ENCODE measurements at regions of chr6 and their contacts with region 1.

Region 1: GRCh38 chr6:26537846-26538571 is at the start of gene HMGN4:
- DNase-seq: peak; percentile 84 to 91
- ATAC-seq: peak; percentile 81 to 86 (median 83)
- H3K4me3 ChIP-seq: peak within 1 kb of the TSS; percentile 81
- H3K27ac ChIP-seq: peak within 1 kb of the TSS; percentile 86
- H3K4me1 ChIP-seq: peaks cover 24% of the 10 kb centered on the region
- H3K27me3 ChIP-seq: no peaks in the 10 kb centered on the region
- CTCF ChIP-seq: no peak
- total RNA-seq, gene HMGN4: 18.5 to 38.4 (median 27.8) TPM

Region 2: DNA sequence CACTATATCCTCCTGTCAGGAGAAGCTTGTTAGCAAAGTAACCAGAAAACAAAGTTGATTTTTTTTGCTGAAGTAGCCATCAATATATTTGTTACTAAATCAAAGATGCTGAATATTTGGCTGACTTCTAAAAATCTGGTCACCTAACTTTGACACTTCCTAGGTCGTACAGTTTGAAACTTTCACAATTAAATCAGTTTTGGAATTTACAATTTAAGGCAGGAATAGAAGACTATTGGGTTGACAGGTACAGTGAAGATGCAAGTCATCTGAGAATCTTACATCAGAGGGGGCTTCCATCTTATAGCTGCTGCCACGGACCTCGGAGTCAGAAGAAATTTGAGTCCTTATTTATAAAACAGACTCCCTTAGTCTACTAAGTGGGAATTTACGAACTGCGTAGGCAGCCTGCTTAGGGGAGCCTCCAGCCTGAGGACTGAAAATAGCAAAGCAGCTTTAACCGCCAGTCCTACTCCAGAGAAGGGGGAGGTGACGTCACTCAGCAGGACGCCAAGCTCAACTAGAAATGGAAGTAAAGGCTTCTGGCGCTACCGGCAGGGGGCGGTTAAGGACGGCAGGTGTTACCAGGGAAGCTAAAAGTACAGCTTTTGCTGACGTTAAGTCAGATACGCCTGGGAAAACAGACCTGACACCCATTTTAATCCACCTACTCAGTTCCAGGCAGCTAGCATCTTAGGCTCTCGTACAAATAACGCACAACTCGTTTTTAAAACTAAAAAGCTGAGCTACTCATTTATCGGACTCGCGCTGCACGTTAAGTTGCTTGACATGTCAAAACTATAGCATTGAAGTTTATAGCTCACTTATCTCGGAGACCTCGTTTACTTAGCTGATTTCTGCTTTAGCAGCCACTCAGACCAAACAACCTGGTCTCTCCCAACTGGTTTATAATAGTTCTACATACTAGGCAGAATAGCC is 511.8 kb before region 1 on chr6:
- intact Hi-C with region 1: loop called in 1 of 2 experiments (anchors 10 kb)
- DNase-seq: peak; percentile 89 to 92
- ATAC-seq: peak; percentile 67 to 78 (median 71)
- H3K4me3 ChIP-seq: peak overlapping the region; percentile 68
- H3K27ac ChIP-seq: peak overlapping the region; percentile 83
- H3K4me1 ChIP-seq: peaks cover 9% of the 10 kb centered on the region
- H3K27me3 ChIP-seq: peaks cover 0 to 30% (median 2%) of the 10 kb centered on the region in 3 donors
- CTCF ChIP-seq: peak; percentile 71

Region 3: DNA sequence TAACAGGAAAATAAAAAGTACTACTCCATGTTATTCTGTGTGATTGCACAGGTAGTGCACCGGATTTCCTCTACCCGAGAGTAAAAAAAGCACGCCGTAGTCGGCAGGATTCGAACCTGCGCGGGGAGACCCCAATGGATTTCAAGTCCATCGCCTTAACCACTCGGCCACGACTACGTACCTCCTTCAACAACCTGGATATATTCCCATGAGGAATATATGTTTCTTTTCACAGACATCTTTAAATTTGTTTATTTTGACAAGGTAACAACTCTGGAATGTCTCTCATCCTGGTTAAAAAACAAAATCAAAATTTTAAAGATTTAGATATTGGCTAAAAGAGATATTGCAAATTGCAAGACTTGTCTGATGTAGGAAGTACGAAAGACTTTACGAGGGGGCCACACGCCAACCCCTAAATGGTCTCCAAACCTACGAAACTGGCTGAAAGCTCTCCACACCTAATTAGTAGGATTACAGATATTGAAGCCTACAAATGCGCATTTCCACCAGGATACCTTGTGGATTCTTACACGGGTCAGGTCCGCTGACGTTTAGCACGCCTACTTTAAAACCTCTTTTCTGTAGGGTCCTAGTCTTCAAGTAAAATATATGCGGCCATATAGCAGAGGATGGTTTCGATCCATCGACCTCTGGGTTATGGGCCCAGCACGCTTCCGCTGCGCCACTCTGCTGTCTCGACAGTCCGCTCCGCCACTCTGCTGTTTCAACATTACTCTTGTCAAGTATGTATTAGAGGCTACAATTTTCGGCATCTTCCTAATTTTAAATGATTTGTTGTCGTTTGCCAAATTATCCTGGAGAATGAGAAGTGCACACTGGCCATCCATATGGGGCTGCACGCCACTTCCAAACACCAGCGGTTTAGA is 225.3 kb before region 1 on chr6:
- intact Hi-C with region 1: loop called in 1 of 2 experiments (anchors 10 kb)
- DNase-seq: peak; percentile 62 to 84
- ATAC-seq: peak; percentile 84 to 88 (median 85)
- H3K4me3 ChIP-seq: peak overlapping the region; percentile 71
- H3K27ac ChIP-seq: peak overlapping the region; percentile 81
- H3K4me1 ChIP-seq: no peaks in the 10 kb centered on the region
- H3K27me3 ChIP-seq: no peaks in the 10 kb centered on the region
- CTCF ChIP-seq: no peak

Region 4: DNA sequence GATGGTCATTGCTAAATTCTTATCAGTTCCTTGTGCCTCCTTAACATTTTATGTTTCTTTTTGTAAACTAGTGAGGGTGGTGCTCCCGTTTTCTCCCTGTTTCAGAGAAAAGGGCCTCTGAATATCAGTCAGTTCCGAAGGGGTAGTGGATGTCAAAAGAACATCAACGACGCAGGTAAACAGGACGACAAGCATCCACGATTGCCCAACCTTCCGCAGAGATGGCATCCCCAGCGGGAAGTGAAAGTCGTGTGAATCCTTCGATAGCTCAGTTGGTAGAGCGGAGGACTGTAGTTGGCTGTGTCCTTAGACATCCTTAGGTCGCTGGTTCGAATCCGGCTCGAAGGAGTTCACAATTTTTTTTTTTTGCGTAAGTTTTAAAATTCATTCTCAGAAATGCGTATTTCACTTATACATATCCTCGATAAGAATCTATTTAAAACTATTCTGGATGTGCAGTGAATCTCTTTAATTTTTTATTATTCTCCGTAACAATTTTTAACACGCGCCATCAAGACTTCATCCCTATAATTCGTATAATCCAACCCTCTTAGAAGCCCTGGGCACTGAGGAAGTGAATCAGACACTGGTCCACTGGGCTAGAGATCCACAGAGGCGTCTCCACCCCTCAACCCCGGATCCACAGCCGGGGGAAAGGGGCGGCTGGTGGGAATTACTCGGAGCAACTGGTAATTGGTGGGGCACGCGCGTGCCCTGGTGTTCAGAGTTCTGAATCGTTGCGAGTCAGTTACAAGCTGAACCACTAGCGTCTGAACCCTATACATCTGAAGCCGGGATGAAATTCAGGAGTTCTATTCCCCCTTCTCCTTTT is 30.8 kb after region 1 on chr6:
- intact Hi-C with region 1: loop called in 1 of 2 experiments (anchors 1 kb)
- DNase-seq: peak; percentile 87 to 93
- ATAC-seq: peak; percentile 79 to 91 (median 83)
- H3K4me3 ChIP-seq: peak overlapping the region; percentile 70
- H3K27ac ChIP-seq: peak overlapping the region; percentile 43
- H3K4me1 ChIP-seq: peaks cover 7% of the 10 kb centered on the region
- H3K27me3 ChIP-seq: no peaks in the 10 kb centered on the region
- CTCF ChIP-seq: no peak

Region 5: GRCh38 chr6:26659042-26659999 is 121.3 kb after region 1 on chr6 and contains the start of gene ZNF322:
- intact Hi-C with region 1: no loop called
- DNase-seq: peak; percentile 95 to 97
- ATAC-seq: peak; percentile 100
- H3K4me3 ChIP-seq: peak within 1 kb of the TSS; percentile 85
- H3K27ac ChIP-seq: peak within 1 kb of the TSS; percentile 85
- H3K4me1 ChIP-seq: peaks cover 15% of the 10 kb centered on the region
- H3K27me3 ChIP-seq: peaks cover 0 to 8% (median 0%) of the 10 kb centered on the region in 3 donors
- CTCF ChIP-seq: no peak
- total RNA-seq, gene ZNF322: 9.0 to 13.6 (median 10.3) TPM

Measured in psoas muscle (tissue), 8 donors.